ENCODE measurements at regions of chr5 and their contacts with region 1.

Region 1: DNA sequence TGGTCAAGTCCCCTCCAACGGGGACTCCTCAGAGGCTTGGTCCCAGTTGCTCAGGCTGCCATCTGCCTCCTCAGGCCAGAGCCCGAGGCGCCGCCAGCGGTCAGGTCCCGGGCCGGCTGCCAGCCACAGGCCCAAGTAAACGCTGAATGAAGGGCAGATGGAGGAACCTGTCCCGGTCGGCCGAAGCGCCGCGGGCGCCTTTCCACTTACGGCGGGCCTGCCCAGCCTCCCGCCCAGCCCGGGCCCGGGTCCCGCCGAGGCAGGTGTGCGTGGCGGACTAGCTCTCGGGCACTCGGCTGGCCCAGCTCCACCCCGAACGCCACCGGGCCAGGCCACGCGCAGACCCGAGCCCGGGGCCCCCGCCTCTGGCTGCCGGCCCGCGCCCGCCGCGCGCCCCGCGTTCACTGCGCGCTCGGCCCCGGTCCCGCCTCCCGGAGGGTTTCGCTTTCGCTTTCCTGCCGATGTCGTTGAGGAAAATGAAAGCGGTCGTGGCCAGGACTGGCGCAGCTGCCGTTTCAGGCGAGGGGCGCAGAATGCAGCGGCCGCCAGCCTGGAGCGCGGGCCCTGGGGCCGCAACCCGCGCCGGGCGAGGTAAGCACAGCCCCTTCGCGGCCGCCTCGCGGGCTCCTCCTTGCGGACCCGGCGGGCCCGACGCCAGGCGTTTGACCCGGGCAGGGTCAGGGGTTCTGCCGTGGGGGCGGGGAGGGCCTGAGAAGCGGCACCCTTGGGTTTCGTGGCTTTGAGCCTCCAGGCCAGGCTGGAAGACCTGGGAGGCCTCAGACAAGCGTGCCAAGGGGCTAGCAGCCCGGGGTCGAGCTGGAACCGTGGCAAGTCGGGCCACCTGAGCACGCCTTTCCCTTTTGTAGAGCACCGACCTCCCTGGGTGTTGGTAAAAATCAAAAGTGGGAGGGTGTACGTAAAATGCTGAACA is 41.2 kb downstream of the SLC22A5 start:
- DNase-seq: peak; percentile 54 to 88
- H3K4me3 ChIP-seq: peak overlapping the region; percentile 35
- H3K4me1 ChIP-seq: peaks cover 11% of the 10 kb centered on the region
- H3K27me3 ChIP-seq: no peaks in the 10 kb centered on the region

Region 2: GRCh38 chr5:132495667-132496190 is 85.0 kb after region 1 on chr5:
- in situ Hi-C with region 1: loop called (anchors 5 kb)
- DNase-seq: peak; percentile 87 to 94
- H3K4me3 ChIP-seq: peak overlapping the region; percentile 53
- H3K4me1 ChIP-seq: peaks cover 6% of the 10 kb centered on the region
- H3K27me3 ChIP-seq: no peaks in the 10 kb centered on the region

Region 3: DNA sequence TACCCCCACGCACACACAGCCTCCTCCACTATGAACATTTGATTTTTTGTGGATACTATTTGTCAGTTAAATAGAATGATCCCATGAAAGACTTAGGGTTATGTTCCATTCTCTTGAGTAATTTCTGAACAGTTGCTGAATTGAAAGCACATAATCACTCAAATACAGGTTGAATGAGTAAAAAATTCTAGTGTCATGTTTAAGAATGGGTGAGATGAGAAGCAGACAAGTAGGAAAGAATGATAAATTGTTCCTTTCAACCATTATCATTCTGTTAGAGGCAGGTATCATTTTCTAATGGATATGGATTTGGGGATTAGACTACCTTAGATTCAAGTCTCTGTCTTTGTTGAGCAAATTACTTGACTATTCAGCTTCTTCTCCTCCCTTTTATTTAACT is 165.4 kb after region 1 on chr5:
- in situ Hi-C with region 1: no loop called
- DNase-seq: peak; percentile 13 to 97
- H3K4me3 ChIP-seq: no peak overlapping the region
- H3K4me1 ChIP-seq: peaks cover 28% of the 10 kb centered on the region
- H3K27me3 ChIP-seq: no peaks in the 10 kb centered on the region

Measured in HAP-1 (cell line).